Ovary (tissue), 10 donors: ENCODE measurements at regions of chr16 and their contacts with region 1.

Region 1: GRCh38 chr16:10373556-10373955 is 12.3 kb upstream of the ATF7IP2 start:
- DNase-seq: no peak
- H3K4me3 ChIP-seq: no peak overlapping the region
- H3K27ac ChIP-seq: no peak overlapping the region
- H3K4me1 ChIP-seq: no peaks in the 10 kb centered on the region
- H3K27me3 ChIP-seq: no peaks in the 10 kb centered on the region
- CTCF ChIP-seq: no peak
- EP300 ChIP-seq: no peak
- POLR2A ChIP-seq: no peak

Region 2: GRCh38 chr16:10345629-10346028 is 27.9 kb before region 1 on chr16:
- intact Hi-C with region 1: loop called in 1 of 4 experiments (anchors 1 kb)
- DNase-seq: no peak
- H3K4me3 ChIP-seq: no peak overlapping the region
- H3K27ac ChIP-seq: no peak overlapping the region
- H3K4me1 ChIP-seq: no peaks in the 10 kb centered on the region
- H3K27me3 ChIP-seq: no peaks in the 10 kb centered on the region
- CTCF ChIP-seq: no peak
- EP300 ChIP-seq: no peak
- POLR2A ChIP-seq: no peak

Region 3: GRCh38 chr16:10473246-10473645 is 99.7 kb after region 1 on chr16:
- intact Hi-C with region 1: no loop called
- DNase-seq: no peak
- H3K4me3 ChIP-seq: no peak overlapping the region
- H3K27ac ChIP-seq: no peak overlapping the region
- H3K4me1 ChIP-seq: no peaks in the 10 kb centered on the region
- H3K27me3 ChIP-seq: no peaks in the 10 kb centered on the region
- CTCF ChIP-seq: no peak
- EP300 ChIP-seq: no peak
- POLR2A ChIP-seq: no peak